Calu3 (cell line): ENCODE measurements at regions of chr14 and their contacts with region 1.

Region 1: GRCh38 chr14:37246427-37246914 is 48.7 kb downstream of the MIPOL1 start:
- DNase-seq: no peak
- H3K4me3 Mint-ChIP-seq: no peak overlapping the region
- H3K27ac Mint-ChIP-seq: no peak overlapping the region
- H3K4me1 Mint-ChIP-seq: no peaks in the 10 kb centered on the region
- H3K27me3 Mint-ChIP-seq: no peaks in the 10 kb centered on the region
- CTCF ChIP-seq: peak; percentile 60

Region 2: DNA sequence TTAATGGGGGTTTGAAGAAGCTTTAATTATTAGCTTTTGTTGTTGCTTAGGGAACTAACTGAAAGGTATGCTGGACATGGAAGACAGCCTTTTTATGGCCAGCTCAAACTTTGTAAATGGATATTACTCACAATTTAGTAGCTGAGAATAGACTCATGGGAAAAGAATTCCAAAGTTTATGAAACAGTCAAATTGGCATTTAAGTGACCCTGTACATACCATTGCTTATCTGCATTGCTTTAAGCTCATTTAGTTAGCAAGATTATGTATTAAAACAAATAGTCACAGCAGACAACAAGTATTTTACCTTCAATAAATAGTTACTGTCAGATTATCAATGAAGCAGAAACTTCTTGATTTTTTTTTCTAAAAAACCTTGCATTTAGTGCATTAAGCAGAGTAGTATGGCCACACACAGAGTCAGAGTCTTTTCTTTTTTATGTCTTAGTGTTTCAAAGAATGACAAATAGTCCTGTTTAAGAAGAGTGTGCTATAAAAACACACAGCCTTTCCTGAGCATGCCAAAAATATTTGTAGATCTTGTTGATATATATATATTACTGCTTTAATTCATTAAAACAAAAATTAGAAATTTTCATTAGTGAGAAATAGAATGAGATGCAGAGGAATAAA is 451.1 kb after region 1 on chr14:
- CTCF ChIA-PET with region 1: no interaction called
- intact Hi-C with region 1: loop called (anchors 5 kb)
- DNase-seq: no peak
- H3K4me3 Mint-ChIP-seq: no peak overlapping the region
- H3K27ac Mint-ChIP-seq: peak overlapping the region; percentile 27
- H3K4me1 Mint-ChIP-seq: peaks cover 38% of the 10 kb centered on the region
- H3K27me3 Mint-ChIP-seq: no peaks in the 10 kb centered on the region
- CTCF ChIP-seq: no peak

Region 3: GRCh38 chr14:37874429-37875191 is 628.1 kb after region 1 on chr14:
- CTCF ChIA-PET with region 1: no interaction called
- intact Hi-C with region 1: loop called (anchors 1 kb)
- DNase-seq: peak; percentile 90
- H3K4me3 Mint-ChIP-seq: no peak overlapping the region
- H3K27ac Mint-ChIP-seq: peak overlapping the region; percentile 61
- H3K4me1 Mint-ChIP-seq: peaks cover 23% of the 10 kb centered on the region
- H3K27me3 Mint-ChIP-seq: no peaks in the 10 kb centered on the region
- CTCF ChIP-seq: peak; percentile 66